Mammary epithelial cell (primary cell): ENCODE measurements at regions of chr18 and their contacts with region 1.

Region 1: DNA sequence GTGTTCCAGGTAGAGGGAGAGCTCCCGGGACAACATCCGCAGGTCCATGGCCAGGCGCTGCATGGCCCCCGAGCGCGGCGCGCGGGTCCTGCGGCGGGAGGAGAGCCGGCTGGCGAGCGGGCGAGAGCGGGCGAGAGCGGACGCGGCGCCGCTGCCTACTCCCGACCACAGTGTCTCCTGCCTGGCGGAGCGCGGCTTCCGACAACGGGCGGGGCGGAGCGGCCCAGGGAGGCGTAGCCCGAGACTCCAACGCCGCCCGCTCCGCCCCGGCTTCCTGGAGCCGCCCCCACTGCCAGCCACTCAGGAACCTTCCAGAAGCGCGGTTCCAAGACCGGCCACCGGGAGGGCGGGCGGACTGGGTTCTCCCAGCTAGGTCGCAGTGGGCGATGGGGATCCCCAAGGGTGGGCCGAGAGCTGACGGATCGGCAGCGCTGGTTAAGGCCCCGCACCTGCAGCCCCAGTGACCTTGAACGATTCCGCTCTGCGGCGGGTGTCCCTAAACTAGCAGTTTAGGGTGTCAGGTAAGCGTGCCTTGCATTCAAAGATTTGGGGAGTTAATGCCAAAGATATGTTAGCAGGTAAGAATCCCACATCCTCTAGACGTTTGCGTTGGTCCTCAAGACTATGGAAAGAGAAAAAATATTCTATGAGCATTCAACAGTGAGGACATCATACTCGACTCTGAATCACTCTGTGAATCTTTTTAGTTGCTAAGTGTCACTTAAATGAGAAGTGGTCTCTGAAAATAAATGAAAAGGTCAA is at the start of gene ABHD3:
- DNase-seq: peak; percentile 91
- H3K4me3 ChIP-seq: peak within 1 kb of the TSS; percentile 72 to 87 (median 72)
- H3K27ac ChIP-seq: peak within 1 kb of the TSS; percentile 84
- H3K4me1 ChIP-seq: peaks cover 9% of the 10 kb centered on the region
- H3K27me3 ChIP-seq: no peaks in the 10 kb centered on the region
- CTCF ChIP-seq: peak in 1 of 2 donors; percentile 53
- total RNA-seq, gene ABHD3: 14.7 to 19.6 TPM

Region 2: GRCh38 chr18:21600526-21601410 is 104.0 kb before region 1 on chr18 and contains the start of gene ESCO1:
- CTCF ChIA-PET with region 1: interaction called, 5 read pairs
- dilution Hi-C with region 1: no loop called
- in situ Hi-C with region 1: no loop called
- intact Hi-C with region 1: loop called (anchors 1 kb)
- DNase-seq: peak; percentile 99
- H3K4me3 ChIP-seq: peak within 1 kb of the TSS; percentile 62 to 99 (median 96)
- H3K27ac ChIP-seq: peak within 1 kb of the TSS; percentile 91
- H3K4me1 ChIP-seq: peaks cover 5% of the 10 kb centered on the region
- H3K27me3 ChIP-seq: no peaks in the 10 kb centered on the region
- CTCF ChIP-seq: peak; percentile 79 to 89
- total RNA-seq, gene ESCO1: 14.9 to 16.2 TPM

Region 3: DNA sequence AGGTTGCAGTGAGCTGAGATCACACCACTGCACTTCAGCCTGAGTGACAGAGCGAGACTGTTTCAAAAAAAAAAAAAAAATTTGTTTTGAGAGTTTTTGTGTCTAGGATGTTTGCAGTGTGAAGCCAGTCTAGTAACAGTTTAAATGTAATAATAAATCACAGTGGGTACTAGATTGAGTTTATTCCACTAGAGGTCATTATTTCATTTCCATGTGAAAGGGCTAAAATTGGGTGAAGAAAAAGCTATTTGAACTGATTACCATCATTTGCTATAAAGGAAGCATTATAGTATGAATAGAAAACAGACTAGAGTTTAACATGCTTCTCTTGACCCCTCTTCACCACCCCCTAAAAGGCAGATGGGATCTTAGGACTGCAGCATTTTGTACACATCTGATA is 72.4 kb before region 1 on chr18:
- CTCF ChIA-PET with region 1: no interaction called
- dilution Hi-C with region 1: loop called (anchors 5 kb)
- in situ Hi-C with region 1: no loop called
- intact Hi-C with region 1: no loop called
- DNase-seq: no peak
- H3K4me3 ChIP-seq: no peak overlapping the region
- H3K27ac ChIP-seq: no peak overlapping the region
- H3K4me1 ChIP-seq: peaks cover under 1% of the 10 kb centered on the region
- H3K27me3 ChIP-seq: no peaks in the 10 kb centered on the region
- CTCF ChIP-seq: no peak

Region 4: DNA sequence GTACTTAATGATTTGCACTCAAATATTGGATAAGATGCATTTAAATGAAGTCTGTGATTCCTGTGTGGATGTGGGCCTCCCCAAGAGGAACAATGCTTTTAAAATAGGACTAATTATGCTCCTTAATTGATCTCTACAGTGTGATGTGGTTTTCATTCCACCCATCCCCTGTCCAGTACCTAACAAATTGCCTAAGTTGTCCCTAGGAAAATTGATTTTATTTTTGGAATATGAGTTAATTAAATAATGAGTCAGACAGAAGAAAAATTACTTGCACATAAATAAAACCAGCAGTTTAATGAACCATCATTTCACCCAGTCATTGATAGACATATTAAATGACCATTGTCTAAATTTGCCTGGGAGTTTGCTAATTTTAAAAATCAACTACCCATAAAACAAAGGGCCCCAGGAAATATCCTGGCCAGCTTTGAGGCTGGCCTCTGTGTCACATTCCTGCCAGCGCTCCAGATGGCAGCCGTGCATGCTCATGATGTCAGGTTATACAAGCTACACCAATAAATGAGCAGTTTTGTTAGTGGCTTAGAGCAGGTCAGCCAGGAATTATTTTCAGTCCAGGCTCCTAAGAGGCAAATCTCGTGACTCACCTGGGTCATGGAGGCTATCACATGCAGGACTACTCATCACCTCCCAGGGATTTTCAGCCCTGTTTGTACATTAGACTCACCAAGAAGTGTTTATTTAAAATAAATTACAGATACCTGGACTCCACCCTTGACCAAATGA is 32.1 kb before region 1 on chr18:
- CTCF ChIA-PET with region 1: no interaction called
- dilution Hi-C with region 1: no loop called
- in situ Hi-C with region 1: no loop called
- intact Hi-C with region 1: loop called (anchors 5 kb)
- DNase-seq: peak; percentile 90
- H3K4me3 ChIP-seq: no peak overlapping the region
- H3K27ac ChIP-seq: peak overlapping the region; percentile 77
- H3K4me1 ChIP-seq: peaks cover 44% of the 10 kb centered on the region
- H3K27me3 ChIP-seq: no peaks in the 10 kb centered on the region
- CTCF ChIP-seq: peak in 1 of 2 donors; percentile 8

Region 5: GRCh38 chr18:22136395-22136794 is 431.6 kb after region 1 on chr18:
- CTCF ChIA-PET with region 1: no interaction called
- dilution Hi-C with region 1: no loop called
- in situ Hi-C with region 1: no loop called
- intact Hi-C with region 1: no loop called
- DNase-seq: peak; percentile 46
- H3K4me3 ChIP-seq: no peak overlapping the region
- H3K27ac ChIP-seq: no peak overlapping the region
- H3K4me1 ChIP-seq: no peaks in the 10 kb centered on the region
- H3K27me3 ChIP-seq: no peaks in the 10 kb centered on the region
- CTCF ChIP-seq: no peak